ENCODE measurements at regions of chr17 and their contacts with region 1.

Region 1: GRCh38 chr17:1455797-1456599 is at the start of gene CRK:
- DNase-seq: peak; percentile 96 to 99
- H3K4me3 ChIP-seq: peak within 1 kb of the TSS; percentile 99
- H3K4me3 Mint-ChIP-seq: peak within 1 kb of the TSS; percentile 93
- H3K27ac Mint-ChIP-seq: peak within 1 kb of the TSS; percentile 94
- H3K4me1 ChIP-seq: peaks cover 9% of the 10 kb centered on the region; the same call in 1 of the 2 replicates
- H3K4me1 Mint-ChIP-seq: peaks cover 13% of the 10 kb centered on the region
- H3K27me3 ChIP-seq: no peaks in the 10 kb centered on the region
- H3K27me3 Mint-ChIP-seq: no peaks in the 10 kb centered on the region
- CTCF ChIP-seq: no peak
- total RNA-seq, gene CRK: 70.0 and 72.3 TPM in 2 replicates

Region 2: DNA sequence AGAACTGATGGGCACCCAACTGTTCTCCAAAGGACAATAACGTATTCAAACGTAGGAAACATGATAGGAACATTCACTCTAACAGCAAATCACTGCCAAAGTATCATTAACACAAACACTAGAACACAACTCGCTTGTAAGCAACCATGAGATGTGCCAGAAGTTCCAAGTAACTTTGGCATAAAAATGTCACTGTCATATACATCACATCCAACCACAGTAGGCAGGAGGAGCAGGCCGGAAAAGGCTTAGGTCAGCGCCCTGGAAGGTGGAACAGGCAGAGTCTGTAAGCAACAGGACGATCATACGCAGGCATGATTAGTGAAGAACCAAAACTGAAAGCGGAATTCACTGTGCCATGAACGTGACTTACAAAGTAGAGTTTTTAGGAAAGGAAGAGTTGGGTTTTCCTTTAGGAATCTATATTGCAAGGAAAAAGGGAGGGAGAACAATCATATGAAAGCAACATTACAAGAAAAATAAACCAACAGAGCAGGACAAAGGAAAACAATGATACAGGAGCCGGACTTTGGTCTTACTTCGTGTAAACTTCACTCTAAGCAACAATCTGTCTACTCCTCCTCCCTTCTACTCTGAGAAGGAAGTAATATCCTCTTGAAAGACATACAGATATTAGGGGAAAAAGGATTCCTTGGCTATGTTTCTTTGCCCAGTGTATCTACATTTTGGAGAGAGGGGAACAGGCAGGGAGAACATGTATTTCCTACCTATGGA is 108.2 kb before region 1 on chr17:
- CTCF ChIA-PET with region 1: no interaction called
- POLR2A ChIA-PET with region 1: no interaction called
- intact Hi-C with region 1: no loop called
- DNase-seq: no peak
- H3K4me3 ChIP-seq: no peak overlapping the region
- H3K4me3 Mint-ChIP-seq: peak overlapping the region; percentile 2
- H3K27ac Mint-ChIP-seq: peak overlapping the region; percentile 29
- H3K4me1 ChIP-seq: peaks cover 8% of the 10 kb centered on the region
- H3K4me1 Mint-ChIP-seq: peaks cover 11% of the 10 kb centered on the region
- H3K27me3 ChIP-seq: no peaks in the 10 kb centered on the region
- H3K27me3 Mint-ChIP-seq: no peaks in the 10 kb centered on the region
- CTCF ChIP-seq: no peak

Region 3: GRCh38 chr17:1474402-1475189 is 18.6 kb after region 1 on chr17:
- CTCF ChIA-PET with region 1: no interaction called
- POLR2A ChIA-PET with region 1: no interaction called
- intact Hi-C with region 1: no loop called
- DNase-seq: no peak
- H3K4me3 ChIP-seq: no peak overlapping the region
- H3K4me3 Mint-ChIP-seq: no peak overlapping the region
- H3K27ac Mint-ChIP-seq: no peak overlapping the region
- H3K4me1 ChIP-seq: no peaks in the 10 kb centered on the region
- H3K4me1 Mint-ChIP-seq: peaks cover under 1% of the 10 kb centered on the region
- H3K27me3 ChIP-seq: no peaks in the 10 kb centered on the region
- H3K27me3 Mint-ChIP-seq: no peaks in the 10 kb centered on the region
- CTCF ChIP-seq: no peak

Region 4: GRCh38 chr17:1484676-1485421 is 28.9 kb after region 1 on chr17:
- CTCF ChIA-PET with region 1: no interaction called
- POLR2A ChIA-PET with region 1: interaction called, 6 read pairs
- intact Hi-C with region 1: loop called (anchors 2 kb)
- DNase-seq: peak; percentile 85
- H3K4me3 ChIP-seq: peak overlapping the region; percentile 77
- H3K4me3 Mint-ChIP-seq: peak overlapping the region; percentile 83
- H3K27ac Mint-ChIP-seq: peak overlapping the region; percentile 91
- H3K4me1 ChIP-seq: peaks cover 17% of the 10 kb centered on the region
- H3K4me1 Mint-ChIP-seq: peaks cover 9% of the 10 kb centered on the region
- H3K27me3 ChIP-seq: no peaks in the 10 kb centered on the region
- H3K27me3 Mint-ChIP-seq: no peaks in the 10 kb centered on the region
- CTCF ChIP-seq: peak in 1 of 2 experiments; percentile 49